ENCODE measurements at regions of chr6 and their contacts with region 1.

Region 1: DNA sequence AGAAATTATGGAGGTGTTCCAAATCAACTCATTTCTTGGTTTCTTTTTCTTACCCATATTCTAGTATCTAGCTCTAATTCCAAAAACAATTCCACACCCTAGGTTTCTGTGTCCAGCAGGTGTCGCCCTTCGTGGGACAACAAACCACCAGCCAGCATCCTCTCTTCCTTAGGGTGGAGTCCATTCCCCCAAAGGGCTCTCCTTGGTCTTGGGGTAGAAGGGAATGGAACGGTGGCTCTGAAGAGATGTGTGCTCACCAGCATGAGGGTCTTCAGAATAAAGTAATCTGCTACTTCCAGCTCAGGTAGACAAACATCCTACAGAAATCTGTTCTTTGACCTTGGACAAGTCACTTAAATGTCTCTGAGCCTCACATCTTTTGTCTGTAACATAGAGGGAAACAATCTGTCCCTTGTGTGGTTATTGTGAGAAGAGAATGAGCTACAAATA is 7.2 kb downstream of the HLA-DMB start:
- DNase-seq: peak; percentile 64 to 89
- ATAC-seq: peak; percentile 65 to 80 (median 80)
- H3K4me3 ChIP-seq: no peak overlapping the region
- H3K4me3 Mint-ChIP-seq: no peak overlapping the region
- H3K27ac ChIP-seq: no peak overlapping the region
- H3K27ac Mint-ChIP-seq: no peak overlapping the region
- H3K4me1 ChIP-seq: peaks cover 15% of the 10 kb centered on the region
- H3K4me1 Mint-ChIP-seq: no peaks in the 10 kb centered on the region
- H3K27me3 ChIP-seq: no peaks in the 10 kb centered on the region
- H3K27me3 Mint-ChIP-seq: no peaks in the 10 kb centered on the region
- CTCF ChIP-seq: peak; percentile 68

Region 2: DNA sequence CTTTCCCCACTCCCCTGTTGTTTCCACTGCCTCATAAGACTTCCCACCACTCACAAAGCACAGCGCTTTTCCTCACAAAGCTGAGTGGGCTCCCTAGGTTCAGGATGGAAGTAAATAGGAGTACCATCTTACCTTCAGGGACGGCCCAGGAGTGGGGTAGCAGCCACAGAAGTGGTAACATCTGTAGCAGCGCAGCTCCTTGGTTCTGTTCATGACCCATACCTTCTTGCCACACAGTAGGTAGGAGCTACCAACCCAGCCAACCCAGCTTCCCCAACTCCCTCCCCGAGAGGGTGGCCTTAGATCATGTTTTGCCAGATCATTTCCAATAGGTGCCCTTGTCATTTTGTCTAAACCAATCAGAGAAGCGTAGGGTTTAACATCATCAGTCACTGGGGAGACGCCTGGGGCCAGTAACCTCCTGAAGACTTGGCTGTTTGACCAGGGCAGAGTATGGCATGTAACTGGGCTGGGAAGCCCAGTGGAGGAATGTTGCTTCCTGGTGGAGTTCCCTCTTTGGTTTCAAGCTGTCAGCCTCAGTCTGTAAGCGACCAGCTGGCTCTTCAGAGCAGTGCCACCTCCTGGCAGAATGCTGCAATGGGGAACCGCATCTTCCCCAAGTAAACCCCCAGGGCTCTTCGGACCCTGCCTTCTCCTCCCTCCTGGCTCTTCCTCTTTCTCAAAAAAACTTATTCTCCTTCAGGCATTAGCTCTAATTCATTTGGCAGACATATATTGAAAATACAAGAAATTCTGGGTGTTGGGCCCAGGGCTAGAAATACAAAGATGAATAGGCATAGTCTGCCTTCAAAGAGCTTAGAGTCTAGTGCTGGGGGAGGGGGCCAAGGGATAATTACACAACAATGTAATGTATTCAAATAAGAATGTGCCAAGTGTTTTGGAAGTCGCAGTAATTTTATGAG is 19.4 kb after region 1 on chr6 and contains the start of gene HLA-DMA:
- intact Hi-C with region 1: loop called (anchors 2 kb)
- DNase-seq: peak; percentile 67 to 91
- ATAC-seq: peak; percentile 97 to 99 (median 97)
- H3K4me3 ChIP-seq: peak within 1 kb of the TSS; percentile 50
- H3K4me3 Mint-ChIP-seq: peak within 1 kb of the TSS; percentile 85
- H3K27ac ChIP-seq: peak within 1 kb of the TSS; percentile 77
- H3K27ac Mint-ChIP-seq: peak within 1 kb of the TSS; percentile 87 to 92
- H3K4me1 ChIP-seq: peaks cover 44% of the 10 kb centered on the region
- H3K4me1 Mint-ChIP-seq: peaks cover 31 to 32% of the 10 kb centered on the region in 2 donors
- H3K27me3 ChIP-seq: no peaks in the 10 kb centered on the region
- H3K27me3 Mint-ChIP-seq: no peaks in the 10 kb centered on the region
- CTCF ChIP-seq: peak; percentile 91
- total RNA-seq, gene HLA-DMA: 39.2 to 57.5 (median 48.1) TPM

Region 3: DNA sequence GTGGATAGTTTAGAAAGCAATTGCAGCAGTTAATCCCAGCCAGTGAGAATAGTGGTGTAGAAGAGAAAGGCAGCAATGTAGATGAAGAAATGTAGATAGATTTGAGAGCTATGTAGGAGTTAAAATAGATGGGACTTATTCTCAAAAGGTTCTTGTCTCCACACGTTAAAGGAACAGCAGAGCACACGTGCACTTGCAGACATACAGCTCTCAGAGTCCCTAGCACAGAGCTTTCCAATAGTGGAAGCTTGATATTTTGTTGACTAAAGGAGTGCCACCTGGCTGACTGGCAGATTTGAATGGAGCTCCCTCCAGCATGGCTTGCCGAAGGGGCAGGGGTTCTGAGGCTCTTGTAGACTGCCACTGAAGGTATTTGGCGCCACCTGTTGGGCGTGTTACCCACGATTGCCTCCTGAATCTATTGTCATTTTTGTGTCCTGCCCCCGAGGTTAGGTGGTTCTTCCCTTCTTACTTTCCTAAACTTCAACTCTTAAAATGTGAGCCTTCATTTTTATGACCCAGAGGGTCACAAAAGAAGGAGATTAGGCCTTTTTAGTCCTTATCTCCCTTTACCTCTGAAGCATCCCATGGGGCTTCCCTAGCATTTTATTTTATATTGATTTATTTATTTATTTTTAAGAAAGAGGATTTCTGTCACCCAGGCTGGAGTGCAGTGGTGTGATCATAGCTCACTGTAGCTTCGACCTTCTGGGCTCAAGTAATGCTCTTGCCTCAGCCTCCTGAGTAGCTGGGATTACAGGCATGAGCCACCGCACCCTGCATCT is 51.1 kb after region 1 on chr6:
- intact Hi-C with region 1: loop called (anchors 1 kb)
- DNase-seq: peak; percentile 85 to 95
- ATAC-seq: peak; percentile 82 to 91 (median 91)
- H3K4me3 ChIP-seq: no peak overlapping the region
- H3K4me3 Mint-ChIP-seq: no peak overlapping the region
- H3K27ac ChIP-seq: no peak overlapping the region
- H3K27ac Mint-ChIP-seq: peak overlapping the region in 1 of 2 donors; percentile 97
- H3K4me1 ChIP-seq: peaks cover 7% of the 10 kb centered on the region
- H3K4me1 Mint-ChIP-seq: peaks cover 20 to 32% of the 10 kb centered on the region in 2 donors
- H3K27me3 ChIP-seq: no peaks in the 10 kb centered on the region
- H3K27me3 Mint-ChIP-seq: no peaks in the 10 kb centered on the region
- CTCF ChIP-seq: peak; percentile 87

Region 4: DNA sequence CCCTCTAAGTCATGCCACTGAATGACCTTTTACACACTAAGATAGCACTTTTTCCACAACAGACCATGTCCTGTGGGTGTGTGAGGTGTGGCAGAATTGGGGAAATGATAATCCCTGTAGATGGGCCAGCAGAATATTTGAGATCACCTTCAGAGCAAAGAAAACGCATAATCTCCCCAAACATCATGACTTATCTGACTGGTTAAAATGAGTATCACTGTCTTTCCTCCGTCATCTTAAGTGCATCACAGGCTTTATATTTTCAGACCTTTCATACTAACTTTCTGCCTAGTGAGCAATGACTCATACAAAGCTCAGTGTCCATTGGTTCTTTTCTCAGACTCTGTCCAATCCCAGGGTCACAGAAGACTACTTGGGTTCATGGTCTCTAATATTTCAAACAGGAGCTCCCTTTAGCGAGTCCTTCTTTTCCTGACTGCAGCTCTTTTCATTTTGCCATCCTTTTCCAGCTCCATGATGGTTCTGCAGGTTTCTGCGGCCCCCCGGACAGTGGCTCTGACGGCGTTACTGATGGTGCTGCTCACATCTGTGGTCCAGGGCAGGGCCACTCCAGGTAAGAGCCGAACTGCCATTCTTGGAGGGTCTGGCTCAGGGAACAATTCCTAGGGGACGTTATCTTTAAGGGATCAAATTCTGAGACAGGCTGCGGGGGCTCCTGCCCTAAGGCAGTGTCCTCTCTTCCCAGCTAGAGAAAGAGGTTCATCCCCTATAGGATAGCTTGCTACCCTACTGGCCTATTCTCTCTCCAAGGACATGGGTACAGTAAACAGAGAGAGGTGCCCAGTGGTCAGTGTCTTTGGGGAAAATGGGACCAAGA is 142.1 kb after region 1 on chr6 and contains the start of gene HLA-DPB1:
- intact Hi-C with region 1: no loop called
- DNase-seq: peak in 1 of 2 donors; percentile 89
- ATAC-seq: peak; percentile 92 to 95 (median 92)
- H3K4me3 ChIP-seq: peak within 1 kb of the TSS; percentile 91
- H3K4me3 Mint-ChIP-seq: peak within 1 kb of the TSS; percentile 89
- H3K27ac ChIP-seq: peak within 1 kb of the TSS; percentile 96
- H3K27ac Mint-ChIP-seq: peak within 1 kb of the TSS; percentile 79 to 81
- H3K4me1 ChIP-seq: peaks cover 56% of the 10 kb centered on the region
- H3K4me1 Mint-ChIP-seq: peaks cover 65 to 73% of the 10 kb centered on the region in 2 donors
- H3K27me3 ChIP-seq: no peaks in the 10 kb centered on the region
- H3K27me3 Mint-ChIP-seq: peaks cover 0 to 9% of the 10 kb centered on the region in 2 donors
- CTCF ChIP-seq: no peak
- total RNA-seq, gene HLA-DPB1: 55.2 to 131 (median 77.1) TPM